GM10248 (cell line): ENCODE measurements at regions of chr12 and their contacts with region 1.

Region 1: GRCh38 chr12:32083489-32083888 is 23.2 kb upstream of the BICD1 start:
- DNase-seq: no peak
- CTCF ChIP-seq: no peak

Region 2: GRCh38 chr12:32047357-32048212 is 35.9 kb before region 1 on chr12:
- CTCF ChIA-PET with region 1: no interaction called
- POLR2A ChIA-PET with region 1: no interaction called
- DNase-seq: no peak
- CTCF ChIP-seq: no peak

Region 3: DNA sequence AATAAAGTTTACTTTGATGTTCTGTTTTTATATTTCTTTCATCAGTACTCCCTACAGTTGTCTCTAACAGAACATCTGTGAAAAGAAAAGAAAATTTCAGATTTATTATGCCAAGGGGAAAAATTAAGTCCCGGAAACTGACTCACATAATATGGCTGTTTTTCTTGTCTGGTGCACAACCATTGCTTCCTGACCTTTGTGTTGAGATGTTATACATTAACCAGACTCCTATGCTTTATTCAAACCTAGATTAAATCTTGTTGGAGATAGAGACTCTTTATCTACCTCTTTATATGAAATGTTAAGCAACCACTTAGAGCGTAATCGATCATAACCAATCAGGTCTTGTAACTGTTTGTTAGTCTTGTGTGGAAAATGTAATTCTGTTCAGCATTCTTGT is 14.4 kb before region 1 on chr12:
- CTCF ChIA-PET with region 1: interaction called, 10 read pairs
- POLR2A ChIA-PET with region 1: no interaction called
- DNase-seq: no peak
- CTCF ChIP-seq: no peak